ENCODE measurements at regions of chr15 and their contacts with region 1.

Region 1: DNA sequence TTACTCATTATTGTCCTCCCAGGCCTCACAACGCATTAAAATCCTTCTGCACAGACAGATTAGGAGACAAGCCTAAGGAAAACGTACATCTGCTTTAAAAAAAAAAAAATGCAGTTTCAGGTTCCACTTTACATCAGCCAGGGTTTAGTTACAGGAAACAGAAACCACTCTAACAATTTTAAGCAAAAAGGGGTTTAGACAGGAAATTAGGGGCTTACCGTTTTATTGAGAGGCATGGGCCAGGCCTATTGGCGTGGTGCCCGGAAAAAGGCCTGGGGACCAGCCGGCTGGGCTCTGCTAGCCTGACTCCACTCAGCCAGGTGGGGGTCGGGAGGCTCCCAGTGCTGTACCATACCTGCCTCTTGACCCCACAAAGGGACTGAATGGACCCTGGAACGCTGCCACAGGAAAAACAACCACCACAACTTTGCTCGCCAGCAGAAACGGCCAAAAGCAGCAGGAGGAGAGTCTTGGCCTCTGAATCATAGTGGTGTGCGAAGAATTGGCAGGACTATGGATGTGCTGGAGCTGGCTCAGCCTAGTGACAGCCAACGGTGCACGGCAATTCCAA is 124.3 kb downstream of the CHSY1 start:
- DNase-seq: peak; percentile 41
- H3K4me3 Mint-ChIP-seq: peak overlapping the region; percentile 75
- H3K27ac Mint-ChIP-seq: peak overlapping the region; percentile 90
- H3K4me1 Mint-ChIP-seq: peaks cover 63% of the 10 kb centered on the region
- H3K27me3 Mint-ChIP-seq: no peaks in the 10 kb centered on the region

Region 2: DNA sequence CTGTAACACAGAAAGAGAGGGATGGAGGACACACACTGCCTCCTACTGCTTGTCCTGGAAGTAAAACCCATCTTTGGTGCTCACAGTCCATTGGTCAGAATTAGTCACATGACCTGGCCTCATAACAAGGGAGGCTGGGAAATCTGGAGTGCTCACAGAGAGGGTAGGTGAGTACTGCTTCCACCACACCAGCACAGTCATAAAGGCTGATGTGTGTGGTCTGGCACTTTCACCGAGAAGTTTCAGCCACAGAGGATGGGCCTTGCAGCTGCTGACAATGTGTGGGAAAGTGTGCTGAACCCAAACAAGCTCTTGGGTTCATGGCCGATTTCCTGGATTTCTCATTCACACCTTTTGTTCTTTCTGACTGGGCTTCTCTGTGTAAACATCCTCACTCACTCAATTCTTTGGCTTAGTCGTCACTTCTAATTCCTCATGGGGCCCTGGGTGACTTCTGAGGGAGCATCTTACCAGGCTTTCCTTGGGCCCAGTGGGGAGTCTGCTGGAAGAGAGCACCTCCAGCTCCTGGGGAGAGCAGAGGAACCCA is 424.5 kb before region 1 on chr15:
- intact Hi-C with region 1: no loop called
- DNase-seq: peak; percentile 14
- H3K4me3 Mint-ChIP-seq: no peak overlapping the region
- H3K27ac Mint-ChIP-seq: peak overlapping the region; percentile 10
- H3K4me1 Mint-ChIP-seq: peaks cover 5% of the 10 kb centered on the region
- H3K27me3 Mint-ChIP-seq: peaks cover 19% of the 10 kb centered on the region

Region 3: DNA sequence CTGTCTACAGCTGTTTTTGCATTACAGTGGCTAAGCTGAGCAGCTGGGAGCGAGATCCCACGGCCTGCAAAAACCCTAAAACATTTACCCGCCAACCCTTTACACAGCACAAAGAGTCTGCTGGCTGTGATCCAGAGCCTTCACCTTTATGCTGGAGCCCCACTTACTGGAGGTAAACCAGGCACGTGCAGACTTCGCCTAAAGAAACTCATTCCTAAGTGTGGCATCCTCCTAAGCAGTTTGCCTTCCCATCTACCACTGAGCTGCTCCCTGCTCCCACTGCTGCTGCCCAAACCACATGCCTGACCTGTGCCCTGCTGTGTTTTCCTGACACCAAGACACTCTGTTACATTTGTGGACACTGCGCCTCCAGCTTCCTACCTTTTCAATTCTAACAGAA is 71.2 kb after region 1 on chr15:
- intact Hi-C with region 1: loop called (anchors 1 kb)
- DNase-seq: no peak
- H3K4me3 Mint-ChIP-seq: peak overlapping the region; percentile 68
- H3K27ac Mint-ChIP-seq: peak overlapping the region; percentile 92
- H3K4me1 Mint-ChIP-seq: peaks cover 92% of the 10 kb centered on the region
- H3K27me3 Mint-ChIP-seq: no peaks in the 10 kb centered on the region

Region 4: GRCh38 chr15:101242160-101242998 is 114.8 kb after region 1 on chr15:
- intact Hi-C with region 1: loop called (anchors 1 kb)
- DNase-seq: peak; percentile 68
- H3K4me3 Mint-ChIP-seq: peak overlapping the region; percentile 60
- H3K27ac Mint-ChIP-seq: peak overlapping the region; percentile 89
- H3K4me1 Mint-ChIP-seq: peaks cover 100% of the 10 kb centered on the region
- H3K27me3 Mint-ChIP-seq: no peaks in the 10 kb centered on the region

Region 5: DNA sequence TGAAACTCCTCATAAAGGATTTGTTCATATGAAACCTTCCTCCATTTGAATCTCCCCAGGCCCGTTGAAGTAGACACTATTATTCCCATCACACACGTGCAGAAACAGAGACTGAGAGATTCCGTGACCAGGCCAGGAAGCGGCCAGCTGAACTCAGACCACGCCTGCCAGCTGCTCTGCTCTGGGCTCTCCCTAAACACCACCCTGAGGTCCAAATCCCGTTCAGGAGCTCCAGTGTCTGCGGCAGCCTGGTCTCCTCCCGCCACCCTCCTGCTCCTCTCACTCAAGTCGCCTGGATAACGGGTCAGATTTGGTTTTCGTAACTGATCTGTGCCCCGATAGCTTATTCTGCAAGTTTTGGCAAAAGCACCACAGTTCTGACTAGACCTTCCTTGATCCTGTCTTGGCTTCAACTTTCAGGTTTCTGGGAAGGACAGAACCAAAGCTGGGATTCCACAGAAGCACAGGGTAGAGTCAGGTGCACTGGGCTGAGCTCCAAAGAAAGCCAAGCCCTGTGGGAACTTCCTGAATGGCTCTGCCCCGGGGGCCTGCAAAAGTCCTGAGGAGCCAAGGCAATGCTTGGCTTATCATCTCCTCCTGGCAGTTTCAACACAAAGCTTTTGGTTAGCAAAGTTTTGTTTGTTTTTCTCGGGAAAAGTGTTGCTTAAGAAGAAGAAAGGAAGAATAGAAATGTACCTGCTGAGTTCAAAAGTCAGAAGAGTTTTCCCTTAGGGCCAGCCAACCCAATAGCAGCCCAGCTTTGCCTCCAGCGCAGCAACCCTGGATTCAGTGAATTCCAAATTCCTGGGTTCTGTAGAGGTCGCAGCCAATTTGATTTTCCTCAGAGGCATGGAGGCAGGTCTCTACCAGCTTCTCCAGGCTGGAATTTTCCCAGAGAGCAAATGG is 221.3 kb after region 1 on chr15:
- intact Hi-C with region 1: no loop called
- DNase-seq: no peak
- H3K4me3 Mint-ChIP-seq: no peak overlapping the region
- H3K27ac Mint-ChIP-seq: no peak overlapping the region
- H3K4me1 Mint-ChIP-seq: no peaks in the 10 kb centered on the region
- H3K27me3 Mint-ChIP-seq: peaks cover 10% of the 10 kb centered on the region